ENCODE measurements at regions of chr20 and their contacts with region 1.

Region 1: GRCh38 chr20:2900845-2901592 is 27.7 kb downstream of the PTPRA start:
- DNase-seq: no peak
- H3K4me3 ChIP-seq: no peak overlapping the region
- H3K27ac ChIP-seq: no peak overlapping the region
- H3K4me1 ChIP-seq: no peaks in the 10 kb centered on the region
- H3K27me3 ChIP-seq: no peaks in the 10 kb centered on the region
- CTCF ChIP-seq: no peak

Region 2: GRCh38 chr20:2086177-2086979 is 814.6 kb before region 1 on chr20:
- CTCF ChIA-PET with region 1: no interaction called
- POLR2A ChIA-PET with region 1: no interaction called
- intact Hi-C with region 1: no loop called
- DNase-seq: no peak
- H3K4me3 ChIP-seq: no peak overlapping the region
- H3K27ac ChIP-seq: no peak overlapping the region
- H3K4me1 ChIP-seq: no peaks in the 10 kb centered on the region
- H3K27me3 ChIP-seq: peaks cover 76% of the 10 kb centered on the region
- CTCF ChIP-seq: no peak

Region 3: GRCh38 chr20:2859330-2860121 is 41.5 kb before region 1 on chr20:
- CTCF ChIA-PET with region 1: no interaction called
- POLR2A ChIA-PET with region 1: interaction called, 31 read pairs
- intact Hi-C with region 1: no loop called
- DNase-seq: no peak
- H3K4me3 ChIP-seq: no peak overlapping the region
- H3K27ac ChIP-seq: no peak overlapping the region
- H3K4me1 ChIP-seq: no peaks in the 10 kb centered on the region
- H3K27me3 ChIP-seq: no peaks in the 10 kb centered on the region
- CTCF ChIP-seq: no peak